Calu3 (cell line): ENCODE measurements at regions of chr15 and their contacts with region 1.

Region 1: DNA sequence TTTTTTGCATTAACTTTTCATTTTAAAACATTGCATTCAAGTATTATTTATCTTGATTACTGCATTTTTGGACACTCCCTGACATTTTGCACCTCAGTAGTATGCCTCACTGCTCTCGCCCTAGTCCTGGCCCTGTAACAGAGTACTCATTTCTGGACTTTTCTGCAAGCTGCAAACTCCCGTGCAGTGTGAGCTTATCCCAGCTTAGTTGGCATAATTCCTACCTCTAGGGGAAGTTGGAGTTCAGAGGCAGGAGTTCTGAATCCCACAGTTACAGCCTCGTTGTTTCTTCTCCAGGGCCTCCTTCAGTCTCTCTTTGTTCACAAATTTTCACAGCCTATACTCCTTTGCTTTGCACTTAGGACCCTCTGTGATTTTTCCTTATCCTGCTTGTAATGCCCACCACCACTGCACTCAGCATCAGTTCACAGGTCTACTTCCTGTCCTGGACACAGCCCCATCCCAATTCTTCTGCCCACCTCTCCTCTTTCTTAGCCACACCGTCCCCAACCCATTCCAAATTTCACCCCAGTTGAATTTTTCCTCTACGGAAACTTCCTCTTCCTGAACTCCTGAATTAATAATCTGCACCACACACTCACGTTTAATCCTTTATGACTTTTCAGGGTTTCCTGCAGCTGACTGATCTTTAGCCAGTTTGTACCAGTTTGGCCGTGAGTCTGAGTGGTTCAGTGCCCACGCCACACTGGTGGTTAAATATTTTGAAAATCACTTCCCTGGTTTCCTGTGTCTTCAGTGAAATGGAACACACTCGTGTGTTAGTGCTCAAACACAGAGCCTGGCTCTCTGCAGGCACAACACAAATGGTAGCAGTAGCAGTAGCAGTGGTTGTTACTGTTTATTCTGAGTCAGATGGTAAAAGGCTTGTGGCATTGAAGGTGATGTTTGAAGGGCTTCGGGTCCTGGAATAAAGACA is 6.3 kb upstream of the CTSH start:
- DNase-seq: no peak
- H3K4me3 Mint-ChIP-seq: peak overlapping the region; percentile 31
- H3K27ac Mint-ChIP-seq: peak overlapping the region; percentile 87
- H3K4me1 Mint-ChIP-seq: peaks cover 56% of the 10 kb centered on the region
- H3K27me3 Mint-ChIP-seq: no peaks in the 10 kb centered on the region
- CTCF ChIP-seq: no peak

Region 2: DNA sequence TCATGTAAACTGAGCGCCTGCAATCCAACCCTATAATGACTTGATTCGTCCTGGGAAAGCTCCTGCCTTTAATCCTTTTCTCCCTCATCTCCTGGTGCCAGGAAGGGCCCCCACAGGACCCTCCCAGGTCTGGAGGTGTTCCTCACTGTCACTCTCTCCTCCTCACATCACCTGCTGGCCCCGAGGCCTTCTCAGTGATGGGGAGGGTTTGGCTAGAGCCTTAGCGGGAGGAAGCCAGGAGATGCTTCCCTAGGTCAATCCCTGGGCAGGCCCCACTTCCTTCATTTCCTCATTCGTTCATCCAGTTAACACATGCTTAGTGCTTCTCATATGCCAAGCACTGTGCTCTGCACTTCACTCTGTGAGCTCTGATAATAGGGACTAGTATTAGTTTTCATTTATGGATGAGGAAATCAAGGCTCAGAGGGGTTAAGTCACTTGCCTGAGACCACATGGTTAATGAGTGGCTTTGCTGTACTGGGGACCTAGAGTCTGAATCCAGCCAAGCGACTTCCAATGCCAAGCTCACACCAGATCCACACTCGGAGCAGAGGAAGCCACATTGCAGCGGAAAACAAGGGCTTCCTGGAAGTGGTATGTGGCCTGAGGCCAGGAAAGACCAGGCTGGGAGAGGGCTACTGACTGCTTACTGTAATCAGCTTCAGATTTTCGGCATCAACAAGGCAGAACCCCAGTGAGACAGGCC is 259.9 kb before region 1 on chr15:
- CTCF ChIA-PET with region 1: no interaction called
- intact Hi-C with region 1: no loop called
- DNase-seq: no peak
- H3K4me3 Mint-ChIP-seq: no peak overlapping the region
- H3K27ac Mint-ChIP-seq: no peak overlapping the region
- H3K4me1 Mint-ChIP-seq: no peaks in the 10 kb centered on the region
- H3K27me3 Mint-ChIP-seq: peaks cover 46% of the 10 kb centered on the region
- CTCF ChIP-seq: no peak

Region 3: DNA sequence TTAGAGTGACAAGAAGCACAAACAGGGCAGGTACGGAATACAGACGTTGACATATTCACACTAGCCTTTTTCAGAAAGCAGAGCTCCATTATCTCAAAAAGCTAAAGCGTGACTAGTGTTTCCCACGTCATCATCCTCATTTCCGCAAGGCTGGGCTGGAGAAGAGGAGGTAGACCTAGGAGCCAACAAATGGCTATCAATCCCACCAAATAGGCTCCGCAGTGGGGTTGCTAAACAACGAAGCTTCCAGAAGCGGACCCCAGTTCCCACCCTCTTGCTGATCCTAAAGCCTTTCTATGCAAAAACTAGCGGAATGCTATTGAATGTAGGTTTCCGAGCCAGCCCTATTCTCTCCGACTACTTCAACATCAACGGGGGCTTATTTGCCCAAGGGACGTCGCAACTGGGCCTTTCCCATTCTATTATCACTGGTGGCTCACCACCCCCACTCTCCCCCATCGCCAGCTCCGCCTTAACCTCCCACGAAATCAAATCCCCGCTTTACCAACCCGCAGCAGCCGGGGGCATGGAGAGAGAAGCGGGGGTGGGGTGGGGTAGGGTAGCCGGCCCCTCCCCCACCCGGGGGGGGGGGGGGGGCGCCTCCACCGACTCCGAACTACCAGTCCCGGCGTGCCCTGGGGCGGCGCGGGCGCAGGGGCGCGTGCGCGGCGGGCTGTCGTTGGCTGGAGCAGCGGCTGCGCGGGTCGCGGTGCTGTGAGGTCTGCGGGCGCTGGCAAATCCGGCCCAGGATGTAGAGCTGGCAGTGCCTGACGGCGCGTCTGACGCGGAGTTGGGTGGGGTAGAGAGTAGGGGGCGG is 78.8 kb before region 1 on chr15 and contains the start of gene MORF4L1:
- CTCF ChIA-PET with region 1: no interaction called
- intact Hi-C with region 1: no loop called
- DNase-seq: peak; percentile 99
- H3K4me3 Mint-ChIP-seq: peak within 1 kb of the TSS; percentile 78
- H3K27ac Mint-ChIP-seq: peak within 1 kb of the TSS; percentile 96
- H3K4me1 Mint-ChIP-seq: peaks cover 17% of the 10 kb centered on the region
- H3K27me3 Mint-ChIP-seq: no peaks in the 10 kb centered on the region
- CTCF ChIP-seq: no peak
- total RNA-seq, gene MORF4L1: 324 and 335 TPM in 2 replicates

Region 4: DNA sequence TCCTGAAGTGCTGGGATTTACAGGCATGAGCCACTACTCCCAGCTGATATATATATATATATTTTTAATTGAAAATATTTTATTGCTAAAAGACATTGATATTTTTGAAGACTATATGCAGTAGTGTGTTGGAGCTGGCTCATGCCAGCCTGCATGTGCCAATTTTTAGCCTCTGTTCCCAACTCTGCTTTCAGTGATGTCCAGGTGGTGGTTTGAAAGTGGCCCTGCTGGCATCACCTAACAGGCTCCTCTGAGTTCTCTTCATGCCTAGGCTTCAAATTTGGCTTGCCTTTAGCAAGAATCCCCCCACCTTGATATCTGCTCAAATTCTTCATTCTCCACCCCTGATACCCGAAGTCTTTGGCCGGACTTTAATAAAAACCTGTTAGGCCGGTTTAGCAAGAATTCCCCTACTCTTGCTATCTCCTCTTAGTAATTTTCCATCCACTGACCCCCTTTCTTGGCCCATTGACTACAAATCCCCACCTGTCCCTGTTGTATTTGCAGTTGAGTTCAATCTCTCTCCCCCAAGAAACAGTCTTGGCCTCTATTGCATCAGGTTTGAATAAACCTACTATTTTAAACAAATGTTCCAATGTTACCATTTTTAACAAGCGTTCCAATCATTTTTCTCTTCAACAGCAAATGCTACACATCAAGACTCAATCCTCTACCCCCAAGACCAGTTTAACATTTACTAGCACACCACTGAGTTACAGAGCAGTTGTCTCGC is 17.5 kb after region 1 on chr15:
- CTCF ChIA-PET with region 1: no interaction called
- intact Hi-C with region 1: loop called (anchors 2 kb)
- DNase-seq: peak; percentile 52
- H3K4me3 Mint-ChIP-seq: peak overlapping the region; percentile 5
- H3K27ac Mint-ChIP-seq: peak overlapping the region; percentile 82
- H3K4me1 Mint-ChIP-seq: peaks cover 39% of the 10 kb centered on the region
- H3K27me3 Mint-ChIP-seq: no peaks in the 10 kb centered on the region
- CTCF ChIP-seq: no peak

Region 5: DNA sequence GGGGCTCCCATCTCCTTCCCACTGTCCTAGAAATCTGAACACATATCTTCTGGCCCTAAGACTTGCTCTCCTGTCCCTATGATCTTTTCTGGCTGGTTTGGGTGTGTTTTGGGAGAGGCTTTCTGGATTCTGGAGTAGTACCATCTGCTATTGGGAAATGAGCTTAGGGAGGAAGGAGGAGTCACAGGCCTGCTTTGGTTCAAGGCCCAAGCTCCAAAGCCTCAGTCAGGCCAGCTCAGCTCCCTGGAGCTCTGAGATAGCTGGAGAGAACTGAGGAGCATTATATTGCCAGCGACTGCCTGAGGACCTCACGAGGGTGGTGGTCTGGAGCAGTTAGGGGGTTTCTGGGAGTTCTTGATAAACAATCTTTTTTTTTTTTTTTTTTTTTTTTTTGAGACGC is 120.7 kb after region 1 on chr15:
- CTCF ChIA-PET with region 1: interaction called, 10 read pairs
- intact Hi-C with region 1: no loop called
- DNase-seq: no peak
- H3K4me3 Mint-ChIP-seq: no peak overlapping the region
- H3K27ac Mint-ChIP-seq: no peak overlapping the region
- H3K4me1 Mint-ChIP-seq: no peaks in the 10 kb centered on the region
- H3K27me3 Mint-ChIP-seq: peaks cover 83% of the 10 kb centered on the region
- CTCF ChIP-seq: no peak